Vagina (tissue), 2 donors: ENCODE measurements at regions of chr11 and their contacts with region 1.

Region 1: DNA sequence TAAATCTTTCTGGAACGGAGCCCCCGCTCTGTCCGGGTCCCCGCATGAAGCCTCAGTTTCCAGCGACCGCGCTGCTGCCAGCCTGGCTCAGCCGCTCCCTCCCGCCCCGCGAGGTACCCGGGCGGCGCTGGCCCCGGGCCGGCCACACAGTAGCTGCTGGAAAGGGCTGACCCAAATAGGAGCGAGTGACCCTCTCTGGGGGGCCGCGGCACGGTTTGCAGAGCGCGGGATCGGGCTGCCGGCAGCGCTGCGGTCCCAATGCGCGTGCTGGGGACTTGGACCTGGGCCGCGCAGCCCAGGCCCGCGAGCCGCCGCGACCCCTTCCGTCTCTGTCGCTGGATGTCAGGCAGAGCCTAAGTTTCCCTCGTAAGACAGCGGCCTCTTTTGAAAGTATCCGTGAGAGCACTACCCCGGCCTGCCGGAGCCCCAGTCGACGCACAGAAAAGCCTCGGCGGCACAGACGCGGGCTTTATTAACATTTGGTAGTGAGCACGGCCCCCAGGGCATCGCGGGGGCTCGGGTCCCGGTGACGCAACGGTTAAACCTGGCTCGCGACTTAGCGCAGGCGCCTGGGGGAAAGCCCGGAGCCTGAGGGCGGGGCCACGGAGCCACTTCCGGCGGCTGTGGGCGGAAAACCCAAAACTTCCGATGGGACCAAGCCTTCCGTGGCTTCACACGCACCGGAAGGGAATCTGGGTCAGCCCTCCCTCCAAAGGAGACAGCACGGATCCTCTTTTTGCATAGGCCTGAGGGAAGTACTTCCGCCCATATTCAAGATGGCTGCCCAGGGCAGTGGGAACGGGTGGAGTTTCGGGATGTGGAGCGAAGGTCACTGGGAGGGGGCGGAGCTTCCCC is 14.9 kb downstream of the BAD start:
- DNase-seq: peak; percentile 100
- H3K4me3 ChIP-seq: peak overlapping the region; percentile 87 to 92
- H3K27ac ChIP-seq: peak overlapping the region; percentile 98
- H3K4me1 ChIP-seq: peaks cover 33% of the 10 kb centered on the region
- H3K27me3 ChIP-seq: no peaks in the 10 kb centered on the region
- CTCF ChIP-seq: no peak
- POLR2A ChIP-seq: no peak

Region 2: GRCh38 chr11:64246871-64247728 is 22.5 kb before region 1 on chr11 and contains the start of gene PPP1R14B:
- intact Hi-C with region 1: loop called (anchors 2 kb)
- DNase-seq: no peak
- H3K4me3 ChIP-seq: peak within 1 kb of the TSS; percentile 48 to 57
- H3K27ac ChIP-seq: peak within 1 kb of the TSS; percentile 81
- H3K4me1 ChIP-seq: peaks cover 50% of the 10 kb centered on the region
- H3K27me3 ChIP-seq: no peaks in the 10 kb centered on the region
- CTCF ChIP-seq: no peak
- POLR2A ChIP-seq: peak in 1 of 2 donors; percentile 11
- total RNA-seq, gene PPP1R14B: 85.2 TPM

Region 3: GRCh38 chr11:66056501-66056900 is 1786.9 kb after region 1 on chr11:
- intact Hi-C with region 1: no loop called
- DNase-seq: no peak
- H3K4me3 ChIP-seq: no peak overlapping the region
- H3K27ac ChIP-seq: no peak overlapping the region
- H3K4me1 ChIP-seq: peaks cover 22% of the 10 kb centered on the region
- H3K27me3 ChIP-seq: no peaks in the 10 kb centered on the region
- CTCF ChIP-seq: no peak
- POLR2A ChIP-seq: no peak